Activated B cell treated with CpG ODN at 0.5 μM for 24 hours (primary cell): ENCODE measurements at regions of chr7 and their contacts with region 1.

Region 1: GRCh38 chr7:139915864-139916716 is 87.0 kb downstream of the TBXAS1 start:
- DNase-seq: peak; percentile 31
- ATAC-seq: peak; percentile 87
- H3K4me3 Mint-ChIP-seq: peak overlapping the region; percentile 58
- H3K27ac Mint-ChIP-seq: peak overlapping the region; percentile 81
- H3K4me1 Mint-ChIP-seq: peaks cover 26% of the 10 kb centered on the region
- H3K27me3 Mint-ChIP-seq: no peaks in the 10 kb centered on the region
- CTCF ChIP-seq: no peak

Region 2: GRCh38 chr7:139855498-139856270 is 60.4 kb before region 1 on chr7:
- CTCF ChIA-PET with region 1: no interaction called
- POLR2A ChIA-PET with region 1: interaction called, 4 read pairs
- intact Hi-C with region 1: loop called (anchors 2 kb)
- DNase-seq: peak; percentile 20
- ATAC-seq: peak; percentile 68
- H3K4me3 Mint-ChIP-seq: no peak overlapping the region
- H3K27ac Mint-ChIP-seq: peak overlapping the region; percentile 63
- H3K4me1 Mint-ChIP-seq: peaks cover 30% of the 10 kb centered on the region
- H3K27me3 Mint-ChIP-seq: no peaks in the 10 kb centered on the region
- CTCF ChIP-seq: no peak

Region 3: DNA sequence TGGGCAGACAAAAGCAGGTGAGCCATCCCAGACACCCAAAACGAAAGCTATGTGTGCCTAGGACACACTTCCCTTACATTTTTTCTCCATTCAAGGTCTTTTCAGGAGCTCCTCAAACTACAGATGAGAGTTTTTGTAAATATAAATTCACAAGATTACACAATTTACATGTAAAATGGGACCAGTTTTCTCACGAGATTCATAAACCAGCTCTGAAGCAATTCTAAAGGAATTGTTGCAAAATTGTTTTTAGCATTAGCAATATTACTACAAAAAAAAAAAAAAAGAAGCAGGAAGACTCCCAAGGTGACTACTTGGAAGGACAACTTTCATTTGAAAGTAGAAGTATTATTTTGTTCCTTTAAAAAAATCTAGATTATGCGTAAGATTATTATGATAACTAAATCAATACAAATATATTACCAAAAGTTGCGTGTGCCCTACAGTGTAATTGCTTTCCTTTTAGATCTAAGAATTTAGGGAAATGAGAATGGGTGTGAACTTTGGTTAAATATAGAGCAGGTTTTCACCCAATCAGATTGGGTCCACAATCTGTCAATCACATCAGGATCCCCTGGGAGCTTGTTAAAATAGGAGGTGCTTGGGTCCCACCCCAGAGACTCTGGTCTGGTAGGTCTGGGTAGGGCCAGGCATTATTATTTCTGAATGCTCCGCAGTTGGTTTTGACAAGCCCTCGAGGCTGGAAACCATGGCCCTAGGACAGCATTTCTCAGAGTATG is 14.9 kb before region 1 on chr7:
- CTCF ChIA-PET with region 1: interaction called, 3 read pairs
- POLR2A ChIA-PET with region 1: interaction called, 15 read pairs
- intact Hi-C with region 1: loop called (anchors 2 kb)
- DNase-seq: no peak
- ATAC-seq: peak; percentile 98
- H3K4me3 Mint-ChIP-seq: no peak overlapping the region
- H3K27ac Mint-ChIP-seq: no peak overlapping the region
- H3K4me1 Mint-ChIP-seq: peaks cover 49% of the 10 kb centered on the region
- H3K27me3 Mint-ChIP-seq: no peaks in the 10 kb centered on the region
- CTCF ChIP-seq: no peak

Region 4: GRCh38 chr7:140304191-140304799 is 388.2 kb after region 1 on chr7:
- CTCF ChIA-PET with region 1: no interaction called
- POLR2A ChIA-PET with region 1: no interaction called
- intact Hi-C with region 1: loop called (anchors 5 kb)
- DNase-seq: no peak
- ATAC-seq: peak; percentile 96
- H3K4me3 Mint-ChIP-seq: peak overlapping the region; percentile 39
- H3K27ac Mint-ChIP-seq: peak overlapping the region; percentile 90
- H3K4me1 Mint-ChIP-seq: peaks cover 5% of the 10 kb centered on the region
- H3K27me3 Mint-ChIP-seq: no peaks in the 10 kb centered on the region
- CTCF ChIP-seq: no peak